CD8-positive, alpha-beta memory T cell (primary cell): ENCODE measurements at regions of chrX and their contacts with region 1.

Region 1: GRCh38 chrX:136880003-136880451 is 498 bp downstream of the RBMX start:
- DNase-seq: peak; percentile 12 to 67 (median 53)
- H3K4me3 ChIP-seq: peak overlapping the region; percentile 96
- H3K4me3 Mint-ChIP-seq: peak overlapping the region; percentile 93 to 99 (median 97)
- H3K27ac ChIP-seq: peak overlapping the region; percentile 98
- H3K27ac Mint-ChIP-seq: peak overlapping the region; percentile 96 to 100 (median 98)
- H3K4me1 ChIP-seq: peaks cover 10% of the 10 kb centered on the region
- H3K4me1 Mint-ChIP-seq: peaks cover 9 to 28% (median 15%) of the 10 kb centered on the region in 3 donors
- H3K27me3 ChIP-seq: no peaks in the 10 kb centered on the region
- H3K27me3 Mint-ChIP-seq: peaks cover 0 to 7% of the 10 kb centered on the region in 2 donors

Region 2: DNA sequence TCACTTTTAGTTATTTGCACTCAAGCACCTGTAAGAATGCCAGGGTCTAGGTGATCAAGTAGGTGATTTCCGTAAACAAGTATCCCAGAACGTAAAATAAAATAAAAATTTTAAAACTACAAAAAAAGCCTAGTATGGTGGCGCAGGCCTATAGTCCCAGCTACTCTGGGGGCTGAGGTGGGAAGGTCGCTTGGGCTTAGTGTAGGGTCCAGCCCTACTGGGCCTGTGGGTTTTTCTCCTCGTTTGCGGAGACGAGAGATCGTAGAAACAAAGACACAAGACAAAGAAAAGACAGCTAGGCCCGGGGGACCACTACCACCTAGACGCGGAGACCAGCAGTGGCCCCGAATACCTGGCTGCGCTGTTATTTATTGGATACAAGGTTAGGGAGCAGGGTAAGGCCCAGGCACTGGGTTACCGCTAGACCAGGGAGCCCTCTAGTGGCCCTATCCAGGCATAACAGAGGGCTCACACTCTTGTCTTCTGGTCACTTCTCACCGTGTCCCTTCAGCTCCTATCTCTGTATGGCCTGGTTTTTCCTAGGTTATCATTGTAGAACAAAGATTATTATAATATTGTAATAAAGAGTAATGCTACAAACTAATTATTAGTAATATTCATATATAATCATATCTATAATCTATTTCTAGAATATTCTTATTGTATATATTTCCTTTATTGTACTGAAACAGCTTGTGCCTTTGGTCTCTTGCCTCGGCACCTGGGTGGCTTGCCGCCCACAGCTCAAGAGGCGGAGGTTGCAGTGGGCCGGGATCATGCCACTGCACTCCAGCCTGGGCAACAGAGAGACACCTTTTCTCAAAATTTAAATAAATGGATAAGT is 948.2 kb before region 1 on chrX:
- CTCF ChIA-PET with region 1: no interaction called
- POLR2A ChIA-PET with region 1: no interaction called
- DNase-seq: peak; percentile 4 to 42 (median 21)
- H3K4me3 ChIP-seq: no peak overlapping the region
- H3K4me3 Mint-ChIP-seq: no peak overlapping the region
- H3K27ac ChIP-seq: no peak overlapping the region
- H3K27ac Mint-ChIP-seq: peak overlapping the region in 2 of 8 donors; percentile 25 to 84
- H3K4me1 ChIP-seq: no peaks in the 10 kb centered on the region
- H3K4me1 Mint-ChIP-seq: no peaks in the 10 kb centered on the region
- H3K27me3 ChIP-seq: no peaks in the 10 kb centered on the region
- H3K27me3 Mint-ChIP-seq: peaks cover 0 to 3% of the 10 kb centered on the region in 2 donors

Region 3: DNA sequence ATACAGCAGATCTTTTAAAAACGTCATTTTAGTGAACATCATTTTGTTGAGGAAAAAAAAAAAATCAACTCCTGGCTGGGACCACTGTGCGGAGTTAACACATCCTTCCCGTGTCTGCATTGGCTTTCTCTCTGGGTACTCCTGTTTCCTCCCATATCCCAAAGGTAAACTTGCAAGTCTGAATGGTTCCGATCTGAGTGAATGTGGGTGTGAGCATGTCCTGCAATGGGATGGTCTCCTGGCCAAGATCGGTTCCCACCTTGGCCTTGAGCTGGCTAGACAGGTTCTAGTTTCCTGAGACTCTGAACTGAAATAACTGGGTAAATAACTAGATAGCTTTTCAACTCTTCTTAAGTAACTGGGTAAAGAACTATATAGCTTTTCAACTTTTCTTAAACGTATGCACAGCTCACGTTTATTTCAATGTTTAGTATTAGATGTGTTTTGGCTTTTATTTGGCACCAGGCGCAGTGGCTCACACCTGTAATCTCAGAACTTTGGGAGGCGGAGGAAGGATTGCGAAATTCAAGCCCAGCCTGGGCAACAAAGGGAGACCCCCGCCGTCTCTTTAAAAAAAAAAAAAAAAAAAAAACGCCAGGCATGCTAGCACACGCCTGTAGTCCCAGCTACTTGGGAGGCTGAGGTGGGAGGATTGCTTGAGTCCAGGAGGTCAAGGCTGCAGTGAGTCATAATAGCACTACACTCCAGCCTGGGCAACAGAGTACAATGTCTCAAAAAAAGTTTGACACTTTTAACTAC is 13.5 kb before region 1 on chrX:
- CTCF ChIA-PET with region 1: no interaction called
- POLR2A ChIA-PET with region 1: interaction called, 15 read pairs
- DNase-seq: no peak
- H3K4me3 ChIP-seq: no peak overlapping the region
- H3K4me3 Mint-ChIP-seq: no peak overlapping the region
- H3K27ac ChIP-seq: no peak overlapping the region
- H3K27ac Mint-ChIP-seq: peak overlapping the region in 7 of 8 donors; percentile 2 to 88 (median 50)
- H3K4me1 ChIP-seq: no peaks in the 10 kb centered on the region
- H3K4me1 Mint-ChIP-seq: peaks cover 31 to 55% (median 42%) of the 10 kb centered on the region in 3 donors
- H3K27me3 ChIP-seq: no peaks in the 10 kb centered on the region
- H3K27me3 Mint-ChIP-seq: no peaks in the 10 kb centered on the region